ENCODE measurements at regions of chr20 and their contacts with region 1.

Region 1: DNA sequence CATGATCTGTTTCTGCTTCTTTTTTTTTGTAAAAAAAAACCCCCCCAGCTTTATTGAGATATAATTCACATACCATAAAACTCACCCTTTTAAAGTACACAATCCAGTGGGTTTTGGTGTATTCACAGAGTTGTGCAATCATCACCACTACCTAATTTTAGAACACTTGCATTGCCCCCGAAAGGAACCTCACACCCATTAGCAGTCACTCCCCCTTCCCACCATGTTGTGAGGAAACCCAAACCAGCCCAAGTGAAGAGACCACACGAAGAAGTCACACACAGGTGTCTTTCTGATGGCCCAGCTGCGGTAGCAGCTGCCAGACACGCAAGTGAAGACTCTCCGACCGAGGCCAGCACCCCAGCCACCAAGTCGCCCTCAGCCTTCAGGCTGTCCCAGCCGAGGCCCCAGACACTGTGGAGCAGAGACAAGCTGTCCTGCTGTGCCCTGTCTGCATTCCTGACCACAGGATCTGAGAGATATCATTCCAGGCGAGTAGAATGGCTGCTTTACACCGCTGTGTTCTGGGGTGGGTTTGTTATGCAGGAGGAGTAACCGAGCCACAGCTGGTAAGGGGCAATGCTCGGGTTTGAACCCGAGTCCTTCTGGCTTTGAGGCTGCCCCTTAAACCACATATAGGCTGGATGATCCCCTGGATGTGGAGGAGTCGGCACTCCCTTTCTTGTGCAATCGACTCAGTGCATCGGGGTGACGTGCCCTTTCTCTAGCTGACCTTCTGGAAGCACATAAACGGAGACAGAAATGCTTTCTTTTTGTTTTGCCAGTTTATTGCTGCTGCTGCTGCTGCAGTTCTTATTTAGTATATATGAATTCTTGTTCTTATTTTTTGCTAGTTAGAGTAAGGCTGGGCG is 59.1 kb upstream of the PTPN1 start:
- DNase-seq: no peak
- ATAC-seq: peak; percentile 11 to 73 (median 60)
- H3K4me3 ChIP-seq: peak overlapping the region in 8 of 10 donors; percentile 1 to 36 (median 30)
- H3K27ac ChIP-seq: peak overlapping the region; percentile 18 to 81 (median 62)
- H3K4me1 ChIP-seq: peaks cover 0 to 37% (median 13%) of the 10 kb centered on the region in 9 donors
- H3K27me3 ChIP-seq: no peaks in the 10 kb centered on the region
- CTCF ChIP-seq: no peak

Region 2: GRCh38 chr20:50278674-50279531 is 172.2 kb before region 1 on chr20:
- intact Hi-C with region 1: loop called in 3 of 10 experiments (anchors 10 kb)
- DNase-seq: peak; percentile 74 to 84
- ATAC-seq: peak; percentile 63 to 88 (median 84)
- H3K4me3 ChIP-seq: peak overlapping the region in 1 of 10 donors; percentile 42
- H3K27ac ChIP-seq: peak overlapping the region; percentile 64 to 96 (median 76)
- H3K4me1 ChIP-seq: peaks cover 7 to 81% (median 26%) of the 10 kb centered on the region in 9 donors
- H3K27me3 ChIP-seq: no peaks in the 10 kb centered on the region
- CTCF ChIP-seq: peak in 8 of 9 donors; percentile 10 to 58 (median 46)

Region 3: GRCh38 chr20:50286609-50287008 is 164.5 kb before region 1 on chr20:
- intact Hi-C with region 1: loop called in 1 of 10 experiments (anchors 10 kb)
- DNase-seq: peak in 1 of 2 donors; percentile 56
- ATAC-seq: peak in 7 of 8 donors; percentile 37 to 79 (median 61)
- H3K4me3 ChIP-seq: peak overlapping the region in 5 of 10 donors; percentile 7 to 31 (median 14)
- H3K27ac ChIP-seq: peak overlapping the region; percentile 39 to 96 (median 84)
- H3K4me1 ChIP-seq: peaks cover 10 to 62% (median 37%) of the 10 kb centered on the region in 9 donors
- H3K27me3 ChIP-seq: no peaks in the 10 kb centered on the region
- CTCF ChIP-seq: no peak

Region 4: DNA sequence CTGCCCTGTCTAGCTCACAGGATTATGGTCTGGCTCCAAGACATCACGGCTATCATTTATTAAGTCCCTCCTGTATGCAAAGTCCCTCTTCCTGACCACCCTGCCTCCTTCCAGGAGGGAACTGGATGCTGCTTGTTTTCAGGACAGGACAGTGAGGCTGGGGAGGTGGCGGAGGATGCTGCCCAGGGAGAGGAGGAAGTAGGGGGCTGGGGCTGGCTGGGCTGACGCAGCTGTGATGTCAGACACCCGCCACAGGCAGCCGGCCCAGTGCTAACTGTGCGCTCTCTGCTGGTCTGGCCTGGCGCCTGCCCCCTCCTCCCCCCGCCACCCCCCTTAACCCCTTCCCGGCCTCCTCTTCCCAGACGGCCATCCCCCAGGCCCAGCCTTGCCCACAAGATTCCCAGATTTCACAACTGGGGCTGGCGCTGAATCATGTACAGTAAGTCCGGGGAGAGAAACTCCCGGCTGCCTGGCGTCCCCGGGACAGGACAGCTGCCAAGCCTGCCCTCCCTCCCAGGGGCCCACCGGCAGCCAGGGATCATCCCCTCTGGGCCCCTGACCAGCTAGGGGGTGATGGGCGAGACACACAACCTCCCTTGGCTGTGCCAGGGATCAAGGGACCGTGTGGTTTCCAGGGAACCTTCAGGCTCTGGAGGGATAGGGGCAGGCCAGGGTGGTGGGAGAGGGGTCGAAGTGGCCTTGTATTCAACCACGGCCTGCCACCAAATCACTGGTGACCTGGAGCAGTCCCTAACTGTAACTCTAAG is 142.4 kb before region 1 on chr20:
- intact Hi-C with region 1: loop called in 1 of 10 experiments (anchors 10 kb)
- DNase-seq: peak; percentile 89 to 90
- ATAC-seq: peak; percentile 57 to 92 (median 80)
- H3K4me3 ChIP-seq: peak overlapping the region in 7 of 10 donors; percentile 0 to 43 (median 28)
- H3K27ac ChIP-seq: peak overlapping the region; percentile 67 to 96 (median 90)
- H3K4me1 ChIP-seq: peaks cover 28 to 90% (median 67%) of the 10 kb centered on the region in 9 donors
- H3K27me3 ChIP-seq: no peaks in the 10 kb centered on the region
- CTCF ChIP-seq: peak in 7 of 9 donors; percentile 8 to 52 (median 30)

Region 5: DNA sequence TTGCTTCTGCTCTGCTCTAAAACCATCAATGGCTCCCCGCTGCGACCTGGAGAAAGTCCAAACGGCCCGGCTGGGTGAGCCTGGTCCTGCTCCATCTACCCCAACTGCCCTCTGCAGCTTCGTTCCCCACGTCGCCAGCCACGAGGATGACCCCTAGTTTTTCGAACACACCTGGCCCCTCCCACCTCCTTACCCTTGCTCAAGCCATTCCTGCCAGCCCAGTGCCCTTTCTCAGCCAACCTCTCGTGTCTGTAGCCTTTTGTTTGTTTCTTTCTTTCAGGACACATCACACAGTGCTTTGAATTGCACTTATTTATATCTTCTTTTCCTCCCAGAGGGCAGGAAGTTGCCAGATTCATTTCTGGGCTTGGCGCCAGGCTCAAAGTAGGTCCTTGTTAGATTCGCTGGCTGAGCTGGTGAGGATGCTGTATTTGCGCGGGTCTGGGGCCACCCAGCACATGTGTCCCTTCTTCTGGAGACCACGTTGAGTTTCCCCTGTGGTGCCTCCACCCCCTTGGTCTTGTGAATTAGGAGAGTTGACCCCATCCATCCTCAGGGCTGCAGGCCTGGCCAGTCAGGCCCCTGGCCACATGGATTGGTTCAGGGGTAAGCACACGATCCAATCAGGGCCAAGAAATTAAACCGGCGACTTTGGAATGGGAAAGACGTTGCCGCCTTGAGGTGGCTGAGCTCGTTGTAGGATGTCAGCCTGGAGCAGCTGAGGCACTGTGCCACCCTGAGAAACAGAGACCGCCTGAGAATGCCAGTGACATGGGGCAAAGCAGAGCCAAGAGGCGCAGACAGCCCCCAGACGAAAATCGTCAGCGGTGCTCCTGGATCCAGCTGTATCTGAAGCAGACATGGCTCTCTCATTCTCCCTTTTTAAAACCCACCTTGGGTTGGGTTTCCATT is 104.5 kb before region 1 on chr20:
- intact Hi-C with region 1: loop called in 1 of 10 experiments (anchors 10 kb)
- DNase-seq: peak; percentile 85 to 91
- ATAC-seq: peak; percentile 77 to 91 (median 84)
- H3K4me3 ChIP-seq: peak overlapping the region in 1 of 10 donors; percentile 32
- H3K27ac ChIP-seq: peak overlapping the region in 9 of 10 donors; percentile 47 to 91 (median 64)
- H3K4me1 ChIP-seq: peaks cover 9 to 77% (median 30%) of the 10 kb centered on the region in 9 donors
- H3K27me3 ChIP-seq: no peaks in the 10 kb centered on the region
- CTCF ChIP-seq: no peak

Region 6: GRCh38 chr20:50395258-50395729 is 55.8 kb before region 1 on chr20:
- intact Hi-C with region 1: loop called in 3 of 10 experiments (anchors 5 to 10 kb)
- DNase-seq: peak; percentile 44 to 79
- ATAC-seq: peak in 7 of 8 donors; percentile 33 to 86 (median 78)
- H3K4me3 ChIP-seq: no peak overlapping the region
- H3K27ac ChIP-seq: peak overlapping the region; percentile 77 to 91 (median 82)
- H3K4me1 ChIP-seq: peaks cover 0 to 60% (median 37%) of the 10 kb centered on the region in 9 donors
- H3K27me3 ChIP-seq: no peaks in the 10 kb centered on the region
- CTCF ChIP-seq: no peak

Region 7: DNA sequence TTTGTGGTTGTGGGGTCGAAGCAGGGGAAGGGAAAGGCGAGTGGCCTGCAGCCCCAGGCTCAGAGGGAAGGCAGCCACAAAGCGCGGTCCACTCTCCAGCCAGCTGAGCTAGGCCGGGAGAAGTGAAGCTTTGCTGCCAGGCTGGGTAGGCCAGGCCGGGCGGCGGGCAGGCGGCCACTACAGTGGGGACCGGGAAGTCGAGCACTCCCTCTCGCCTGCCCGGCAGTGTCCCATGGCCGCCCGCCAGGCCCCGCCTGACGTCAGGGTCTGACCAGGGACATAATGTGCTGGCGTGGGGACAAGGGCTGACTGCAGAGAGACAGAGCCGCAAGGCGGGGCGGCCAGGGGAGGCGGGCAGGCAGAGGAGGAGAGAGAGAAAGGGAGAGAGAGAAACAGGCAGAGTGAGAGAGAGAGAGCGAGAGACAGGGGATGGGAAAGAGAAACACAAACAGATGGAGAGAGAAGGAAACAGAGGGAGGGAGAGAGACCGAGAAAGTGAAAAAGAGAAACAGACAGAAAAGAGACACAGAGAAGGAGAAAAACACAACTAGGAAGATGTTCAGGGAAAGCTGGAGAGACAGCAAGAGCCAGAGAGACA is 35.5 kb before region 1 on chr20:
- intact Hi-C with region 1: loop called in 4 of 10 experiments (anchors 5 kb)
- DNase-seq: peak; percentile 99 to 100
- ATAC-seq: peak; percentile 96 to 99 (median 99)
- H3K4me3 ChIP-seq: peak overlapping the region in 4 of 10 donors; percentile 7 to 12 (median 11)
- H3K27ac ChIP-seq: peak overlapping the region; percentile 89 to 99 (median 96)
- H3K4me1 ChIP-seq: peaks cover 13 to 52% (median 31%) of the 10 kb centered on the region in 9 donors
- H3K27me3 ChIP-seq: no peaks in the 10 kb centered on the region
- CTCF ChIP-seq: peak in 2 of 9 donors; percentile 7 to 12

Measured in heart right ventricle (tissue), 16 donors.